Calu3 (cell line): ENCODE measurements at regions of chr5 and their contacts with region 1.

Region 1: DNA sequence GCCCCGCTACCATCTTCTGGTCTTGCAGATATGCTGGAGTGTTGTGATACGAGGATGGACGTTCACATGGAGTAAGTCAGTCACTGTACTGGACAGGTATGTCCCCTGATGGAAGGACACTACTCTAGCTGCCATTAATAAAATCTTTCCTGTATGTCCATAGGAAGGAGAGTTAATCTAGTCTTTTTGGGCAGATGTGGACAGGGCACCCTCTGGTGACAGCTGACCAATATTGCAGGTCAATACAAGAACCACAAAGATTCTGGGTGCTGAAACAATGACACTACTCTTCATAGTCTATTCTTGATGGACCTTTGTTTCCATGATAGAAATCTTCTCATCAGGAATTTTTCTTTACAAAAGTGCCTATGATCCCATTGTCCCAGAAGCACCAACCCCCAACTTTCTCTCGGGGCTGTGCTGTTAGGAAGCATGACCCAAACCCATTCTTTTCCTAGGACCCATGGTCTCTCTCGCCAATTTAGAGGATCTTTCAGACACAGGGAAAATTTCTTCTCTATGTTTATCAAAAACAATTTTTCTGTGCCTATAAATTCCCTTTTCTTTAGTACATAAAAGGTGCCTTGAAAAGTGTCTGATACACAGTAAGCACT is 376.9 kb downstream of the DTWD2 start:
- DNase-seq: peak; percentile 34
- H3K4me3 Mint-ChIP-seq: no peak overlapping the region
- H3K27ac Mint-ChIP-seq: no peak overlapping the region
- H3K4me1 Mint-ChIP-seq: no peaks in the 10 kb centered on the region
- H3K27me3 Mint-ChIP-seq: no peaks in the 10 kb centered on the region
- CTCF ChIP-seq: peak; percentile 37

Region 2: DNA sequence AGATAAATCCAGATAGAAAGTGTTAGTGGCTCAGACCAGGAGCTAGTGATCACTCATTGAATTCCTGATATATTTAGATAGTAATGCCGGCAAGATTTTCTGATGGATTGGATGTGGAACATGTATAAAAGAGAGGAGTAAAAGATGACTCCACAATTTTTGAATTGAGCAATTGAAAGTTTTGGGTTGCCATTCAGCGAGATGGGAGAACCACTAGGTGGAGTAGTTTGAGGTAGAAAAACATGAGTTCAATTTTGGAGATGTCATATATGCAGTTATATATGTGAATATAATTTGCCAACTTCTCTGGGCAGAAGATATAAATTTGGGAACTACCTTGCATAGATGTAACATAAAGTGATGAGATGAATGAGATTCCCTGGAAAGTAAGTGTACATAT is 1534.3 kb before region 1 on chr5:
- CTCF ChIA-PET with region 1: no interaction called
- intact Hi-C with region 1: loop called (anchors 5 kb)
- DNase-seq: no peak
- H3K4me3 Mint-ChIP-seq: no peak overlapping the region
- H3K27ac Mint-ChIP-seq: no peak overlapping the region
- H3K4me1 Mint-ChIP-seq: no peaks in the 10 kb centered on the region
- H3K27me3 Mint-ChIP-seq: no peaks in the 10 kb centered on the region
- CTCF ChIP-seq: peak; percentile 45

Region 3: DNA sequence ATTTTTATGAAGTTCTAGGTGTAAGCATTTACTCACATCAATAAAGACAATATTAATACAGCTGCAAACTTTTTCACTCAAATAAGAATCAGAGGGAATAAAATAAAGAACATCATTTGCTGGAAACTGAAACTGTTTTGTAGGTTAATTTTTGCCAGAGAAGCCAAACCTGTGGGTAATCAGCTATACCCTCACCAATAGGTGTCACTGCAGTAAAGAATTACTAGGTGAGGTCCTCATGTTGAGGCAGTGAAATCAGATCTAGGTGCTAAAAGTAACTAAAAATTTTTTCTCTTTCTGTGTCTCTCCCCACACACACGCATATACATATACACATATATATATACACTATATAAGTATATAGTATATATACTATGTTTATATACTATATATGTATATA is 1020.5 kb before region 1 on chr5:
- CTCF ChIA-PET with region 1: no interaction called
- intact Hi-C with region 1: loop called (anchors 10 kb)
- DNase-seq: peak; percentile 17
- H3K4me3 Mint-ChIP-seq: no peak overlapping the region
- H3K27ac Mint-ChIP-seq: no peak overlapping the region
- H3K4me1 Mint-ChIP-seq: no peaks in the 10 kb centered on the region
- H3K27me3 Mint-ChIP-seq: no peaks in the 10 kb centered on the region
- CTCF ChIP-seq: no peak

Region 4: GRCh38 chr5:118506217-118506852 is 105.1 kb before region 1 on chr5:
- CTCF ChIA-PET with region 1: no interaction called
- intact Hi-C with region 1: no loop called
- DNase-seq: no peak
- H3K4me3 Mint-ChIP-seq: no peak overlapping the region
- H3K27ac Mint-ChIP-seq: no peak overlapping the region
- H3K4me1 Mint-ChIP-seq: no peaks in the 10 kb centered on the region
- H3K27me3 Mint-ChIP-seq: no peaks in the 10 kb centered on the region
- CTCF ChIP-seq: no peak

Region 5: DNA sequence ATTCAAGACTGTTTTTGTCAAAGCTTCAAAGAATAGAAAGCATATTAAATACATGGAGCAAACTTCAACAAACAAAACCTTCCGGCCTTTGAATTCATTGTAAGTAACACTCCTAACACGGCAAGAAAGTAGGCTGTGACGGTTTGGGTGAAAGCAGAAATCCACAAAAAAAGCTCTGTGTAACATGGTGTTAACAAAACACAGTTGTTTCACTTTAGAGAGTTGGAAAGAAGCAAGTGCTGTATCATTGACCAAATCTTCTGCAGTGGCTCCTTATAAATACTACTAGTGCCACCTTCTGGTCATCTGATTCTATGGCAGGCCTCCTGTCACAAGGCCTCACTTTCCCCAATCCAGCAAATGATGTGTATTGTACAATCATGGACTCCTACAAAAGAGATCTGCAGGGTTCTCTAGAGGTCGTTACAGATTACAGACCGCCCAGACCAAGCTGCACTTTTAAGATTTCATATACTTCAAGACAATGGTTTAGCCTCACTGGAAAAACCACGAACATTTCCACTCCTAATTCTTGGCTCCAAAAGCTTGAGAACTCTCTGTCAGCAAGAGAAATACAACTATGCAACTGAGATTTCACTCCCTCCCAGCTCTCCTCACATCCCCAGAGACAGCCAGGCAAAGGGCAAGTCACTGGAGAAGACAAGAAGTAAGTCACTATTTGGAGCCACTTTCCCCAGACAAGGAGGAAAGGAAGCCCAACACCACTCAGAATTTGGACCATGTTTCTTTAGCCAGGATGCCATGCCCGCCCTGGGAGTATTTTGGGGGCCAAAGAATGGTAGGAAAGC is 180.7 kb after region 1 on chr5:
- CTCF ChIA-PET with region 1: no interaction called
- intact Hi-C with region 1: loop called (anchors 5 kb)
- DNase-seq: peak; percentile 41
- H3K4me3 Mint-ChIP-seq: no peak overlapping the region
- H3K27ac Mint-ChIP-seq: no peak overlapping the region
- H3K4me1 Mint-ChIP-seq: no peaks in the 10 kb centered on the region
- H3K27me3 Mint-ChIP-seq: no peaks in the 10 kb centered on the region
- CTCF ChIP-seq: peak; percentile 71

Region 6: DNA sequence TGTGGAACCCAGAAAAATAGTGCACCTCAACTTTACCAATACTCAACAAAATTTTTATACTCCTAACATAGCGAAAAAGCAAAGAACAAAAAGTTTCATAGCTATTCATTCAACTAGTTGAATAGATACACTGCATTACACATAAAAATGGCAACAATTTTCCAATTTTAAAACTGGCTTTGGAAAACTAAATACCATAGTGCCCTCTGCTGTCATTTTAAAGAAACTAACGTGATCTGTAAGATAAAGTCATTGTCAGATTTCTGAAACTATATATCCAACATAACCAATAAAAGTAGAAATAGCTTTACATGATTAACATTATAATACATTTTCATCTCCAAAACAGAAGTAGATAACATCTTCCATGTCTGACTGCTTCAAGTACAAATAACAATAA is 345.3 kb after region 1 on chr5:
- CTCF ChIA-PET with region 1: no interaction called
- intact Hi-C with region 1: loop called (anchors 10 kb)
- DNase-seq: no peak
- H3K4me3 Mint-ChIP-seq: no peak overlapping the region
- H3K27ac Mint-ChIP-seq: no peak overlapping the region
- H3K4me1 Mint-ChIP-seq: no peaks in the 10 kb centered on the region
- H3K27me3 Mint-ChIP-seq: no peaks in the 10 kb centered on the region
- CTCF ChIP-seq: no peak